Transverse colon (tissue), 4 donors: ENCODE measurements at regions of chr20 and their contacts with region 1.

Region 1: DNA sequence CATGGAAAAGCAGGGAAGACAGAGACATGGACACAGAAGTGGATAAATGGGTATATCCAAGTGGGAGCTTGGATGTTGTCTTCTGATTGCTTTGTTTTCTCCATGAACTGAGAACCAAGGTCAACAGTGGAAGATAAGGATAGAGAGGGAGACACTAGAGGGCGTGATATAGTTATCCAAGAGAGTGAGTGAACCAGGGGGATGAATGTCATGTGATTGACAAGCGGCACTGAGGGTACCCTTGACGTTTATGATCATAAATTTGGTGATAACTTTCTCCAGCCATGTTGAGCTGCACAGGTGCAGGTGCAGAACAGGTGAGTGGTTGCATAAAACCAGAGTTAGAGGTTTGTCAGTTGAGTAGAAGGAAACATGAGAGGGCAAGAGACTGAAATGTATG is 20.7 kb downstream of the EBF4 start:
- DNase-seq: no peak
- H3K4me3 ChIP-seq: no peak overlapping the region
- H3K27ac ChIP-seq: no peak overlapping the region
- H3K4me1 ChIP-seq: no peaks in the 10 kb centered on the region
- H3K27me3 ChIP-seq: peaks cover 12% of the 10 kb centered on the region
- CTCF ChIP-seq: peak in 2 of 5 experiments; percentile 17 to 29
- EP300 ChIP-seq: no peak
- POLR2A ChIP-seq: no peak

Region 2: DNA sequence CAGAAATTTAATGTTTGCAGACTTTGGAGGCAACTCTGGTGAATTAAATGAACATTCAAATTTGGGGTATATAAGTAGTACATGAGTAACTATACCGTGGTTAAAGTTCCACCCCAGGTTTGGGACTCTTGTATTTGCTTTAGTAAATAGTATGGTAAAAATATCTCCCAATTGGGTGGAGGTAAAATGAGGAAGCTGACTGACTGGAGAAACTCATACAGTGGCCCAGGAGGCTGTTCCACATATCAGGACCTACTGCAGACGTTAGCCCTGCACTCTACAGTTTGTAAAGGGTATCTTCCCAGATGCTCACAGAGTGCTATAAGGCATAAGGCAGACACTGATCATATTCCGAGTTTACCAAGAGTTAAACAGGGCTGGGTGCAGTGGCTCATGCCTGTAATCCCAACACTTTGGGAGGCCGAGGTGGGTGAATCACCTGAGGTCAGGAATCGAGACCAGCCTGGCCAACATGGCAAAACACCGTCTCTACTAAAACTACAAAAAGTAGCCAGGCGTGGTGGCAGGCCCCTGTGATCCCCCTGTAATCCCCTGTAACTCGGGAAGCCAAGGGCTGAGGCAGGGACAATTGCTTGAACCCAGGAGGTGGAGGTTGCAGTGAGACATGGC is 33.5 kb after region 1 on chr20:
- in situ Hi-C with region 1: no loop called
- intact Hi-C with region 1: loop called (anchors 1 kb)
- DNase-seq: no peak
- H3K4me3 ChIP-seq: no peak overlapping the region
- H3K27ac ChIP-seq: no peak overlapping the region
- H3K4me1 ChIP-seq: peaks cover 8 to 26% (median 17%) of the 10 kb centered on the region in 4 donors
- H3K27me3 ChIP-seq: peaks cover 6% of the 10 kb centered on the region
- CTCF ChIP-seq: no peak
- EP300 ChIP-seq: no peak
- POLR2A ChIP-seq: no peak